Transverse colon (tissue), 4 donors: ENCODE measurements at regions of chr1 and their contacts with region 1.

Region 1: GRCh38 chr1:183915625-183916510 is 110.9 kb downstream of the RGL1 start:
- DNase-seq: peak; percentile 68
- H3K4me3 ChIP-seq: no peak overlapping the region
- H3K27ac ChIP-seq: peak overlapping the region; percentile 33 to 65 (median 54)
- H3K4me1 ChIP-seq: peaks cover 0 to 23% (median 6%) of the 10 kb centered on the region in 4 donors
- H3K27me3 ChIP-seq: no peaks in the 10 kb centered on the region
- CTCF ChIP-seq: peak; percentile 81 to 83 (median 82)
- EP300 ChIP-seq: no peak
- POLR2A ChIP-seq: no peak

Region 2: GRCh38 chr1:183655562-183656075 is 260.2 kb before region 1 on chr1:
- in situ Hi-C with region 1: loop called in 3 of 4 experiments (anchors 10 kb)
- intact Hi-C with region 1: no loop called
- DNase-seq: peak; percentile 84
- H3K4me3 ChIP-seq: no peak overlapping the region
- H3K27ac ChIP-seq: no peak overlapping the region
- H3K4me1 ChIP-seq: peaks cover 0 to 40% (median 22%) of the 10 kb centered on the region in 4 donors
- H3K27me3 ChIP-seq: no peaks in the 10 kb centered on the region
- CTCF ChIP-seq: peak; percentile 83 to 90 (median 86)
- EP300 ChIP-seq: no peak
- POLR2A ChIP-seq: no peak

Region 3: GRCh38 chr1:183685112-183685713 is 230.7 kb before region 1 on chr1:
- in situ Hi-C with region 1: loop called in 1 of 4 experiments (anchors 25 kb)
- intact Hi-C with region 1: no loop called
- DNase-seq: no peak
- H3K4me3 ChIP-seq: no peak overlapping the region
- H3K27ac ChIP-seq: no peak overlapping the region
- H3K4me1 ChIP-seq: no peaks in the 10 kb centered on the region
- H3K27me3 ChIP-seq: no peaks in the 10 kb centered on the region
- CTCF ChIP-seq: peak; percentile 71 to 78 (median 76)
- EP300 ChIP-seq: no peak
- POLR2A ChIP-seq: no peak

Region 4: GRCh38 chr1:183804881-183805841 is 110.7 kb before region 1 on chr1 and contains the start of gene RGL1:
- in situ Hi-C with region 1: no loop called
- intact Hi-C with region 1: loop called (anchors 10 kb)
- DNase-seq: peak; percentile 60
- H3K4me3 ChIP-seq: peak within 1 kb of the TSS; percentile 39 to 63 (median 47)
- H3K27ac ChIP-seq: peak within 1 kb of the TSS; percentile 84 to 86 (median 84)
- H3K4me1 ChIP-seq: peaks cover 0 to 33% (median 3%) of the 10 kb centered on the region in 4 donors
- H3K27me3 ChIP-seq: peaks cover 11% of the 10 kb centered on the region
- CTCF ChIP-seq: no peak
- EP300 ChIP-seq: no peak
- POLR2A ChIP-seq: peak; percentile 19
- total RNA-seq, gene RGL1: 12.1 to 13.8 (median 13.0) TPM

Region 5: DNA sequence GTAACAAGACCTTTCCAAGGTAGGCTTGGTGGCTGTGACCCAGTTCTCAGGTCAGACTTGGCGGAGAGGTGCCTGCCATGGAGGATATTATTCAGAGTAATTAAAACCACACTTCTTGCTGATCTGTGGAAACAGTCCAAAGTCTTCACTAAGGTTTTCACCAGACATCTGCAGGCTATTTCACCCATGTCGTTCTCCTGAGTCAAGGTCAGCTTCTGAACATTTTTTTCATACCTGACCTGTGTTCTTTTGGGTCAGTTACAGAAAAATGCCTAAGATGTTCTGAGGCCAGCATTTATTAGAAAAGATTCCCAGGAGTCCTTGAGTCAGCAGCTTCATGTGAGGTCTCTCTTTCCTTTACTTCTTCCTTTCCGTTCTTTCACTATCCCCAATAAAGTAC is 56.0 kb before region 1 on chr1:
- in situ Hi-C with region 1: no loop called
- intact Hi-C with region 1: no loop called
- DNase-seq: no peak
- H3K4me3 ChIP-seq: no peak overlapping the region
- H3K27ac ChIP-seq: no peak overlapping the region
- H3K4me1 ChIP-seq: no peaks in the 10 kb centered on the region
- H3K27me3 ChIP-seq: no peaks in the 10 kb centered on the region
- CTCF ChIP-seq: no peak
- EP300 ChIP-seq: no peak
- POLR2A ChIP-seq: no peak